AG04449 (cell line): ENCODE measurements at regions of chr22 and their contacts with region 1.

Region 1: DNA sequence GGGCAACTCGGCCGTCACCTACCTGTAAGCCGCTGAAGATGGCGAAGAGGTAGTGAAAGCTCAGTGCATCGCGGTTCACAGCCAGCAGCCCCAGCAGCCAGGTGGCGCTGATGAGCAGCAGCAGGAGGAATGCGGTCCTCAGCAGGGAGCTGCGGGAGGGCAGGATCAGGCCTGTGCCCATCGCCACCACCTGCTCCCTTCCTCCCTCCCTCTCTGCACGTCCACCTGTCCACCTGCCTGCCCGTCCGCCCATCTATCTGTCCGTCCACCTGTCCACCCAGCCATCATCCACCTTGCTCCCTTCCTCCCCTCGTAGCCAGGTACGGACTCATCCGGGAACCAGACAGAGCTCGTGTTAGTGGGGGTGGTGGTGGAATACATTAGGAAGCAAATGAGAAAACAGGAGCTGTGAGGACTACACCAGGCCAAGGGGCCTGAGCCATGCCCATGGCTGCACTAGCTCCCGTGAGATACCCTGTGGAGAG is 32.2 kb downstream of the TRMU start:
- DNase-seq: no peak
- H3K4me3 ChIP-seq: no peak overlapping the region
- CTCF ChIP-seq: peak; percentile 97

Region 2: GRCh38 chr22:46245511-46245910 is 122.2 kb before region 1 on chr22:
- CTCF ChIA-PET with region 1: no interaction called
- POLR2A ChIA-PET with region 1: no interaction called
- DNase-seq: no peak
- H3K4me3 ChIP-seq: no peak overlapping the region
- CTCF ChIP-seq: no peak

Region 3: GRCh38 chr22:46355371-46355995 is 12.3 kb before region 1 on chr22:
- CTCF ChIA-PET with region 1: interaction called, 17 read pairs
- POLR2A ChIA-PET with region 1: no interaction called
- DNase-seq: no peak
- H3K4me3 ChIP-seq: no peak overlapping the region
- CTCF ChIP-seq: peak; percentile 85

Region 4: GRCh38 chr22:46390652-46391301 is 23.0 kb after region 1 on chr22:
- CTCF ChIA-PET with region 1: interaction called, 18 read pairs
- POLR2A ChIA-PET with region 1: no interaction called
- DNase-seq: no peak
- H3K4me3 ChIP-seq: no peak overlapping the region
- CTCF ChIP-seq: peak; percentile 62

Region 5: GRCh38 chr22:46542011-46542985 is 174.5 kb after region 1 on chr22:
- CTCF ChIA-PET with region 1: interaction called, 284 read pairs
- POLR2A ChIA-PET with region 1: no interaction called
- DNase-seq: no peak
- H3K4me3 ChIP-seq: no peak overlapping the region
- CTCF ChIP-seq: peak; percentile 98